Mammary epithelial cell (primary cell): ENCODE measurements at regions of chr9 and their contacts with region 1.

Region 1: DNA sequence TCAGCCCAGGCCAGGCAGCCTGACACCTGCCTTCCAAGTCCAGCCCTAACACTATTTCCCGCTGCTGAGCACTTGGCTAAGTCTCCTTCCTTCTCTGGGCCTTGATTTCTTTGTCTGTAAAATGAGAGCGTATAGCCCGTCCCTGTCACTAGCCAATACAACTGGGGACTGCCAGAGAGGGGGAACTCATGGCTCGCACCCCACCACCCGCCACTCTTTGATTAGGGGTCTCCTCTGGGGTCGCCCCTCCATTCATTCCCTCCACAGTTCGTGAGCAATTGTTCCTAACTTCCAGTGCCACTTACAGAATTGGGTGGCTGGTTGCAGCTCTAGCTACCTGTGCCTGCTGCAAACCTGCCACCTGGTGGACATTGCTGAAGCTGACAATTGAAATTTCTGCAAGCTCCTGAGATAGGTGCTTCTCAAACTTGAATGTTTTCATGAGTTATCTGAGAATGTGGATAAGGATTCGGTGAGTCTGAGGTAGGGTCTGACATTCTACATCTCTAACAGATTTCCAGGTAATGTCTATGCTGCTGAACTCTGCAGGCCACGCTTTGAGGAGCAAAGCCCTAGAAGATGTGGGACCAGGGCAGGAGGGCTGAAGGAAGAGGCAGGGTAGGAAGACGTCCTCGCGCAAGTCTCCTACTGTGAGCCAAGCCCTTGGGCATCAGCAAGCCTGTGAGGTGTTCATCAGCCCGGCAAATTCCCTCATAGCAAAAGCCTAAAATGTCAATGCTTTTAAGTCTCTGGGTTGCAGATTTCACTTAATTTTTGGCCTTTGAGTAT is 13.3 kb upstream of the RECK start:
- DNase-seq: peak; percentile 52
- H3K4me3 ChIP-seq: no peak overlapping the region
- H3K27ac ChIP-seq: no peak overlapping the region
- H3K4me1 ChIP-seq: peaks cover 5% of the 10 kb centered on the region
- H3K27me3 ChIP-seq: no peaks in the 10 kb centered on the region
- CTCF ChIP-seq: peak; percentile 91 to 94

Region 2: DNA sequence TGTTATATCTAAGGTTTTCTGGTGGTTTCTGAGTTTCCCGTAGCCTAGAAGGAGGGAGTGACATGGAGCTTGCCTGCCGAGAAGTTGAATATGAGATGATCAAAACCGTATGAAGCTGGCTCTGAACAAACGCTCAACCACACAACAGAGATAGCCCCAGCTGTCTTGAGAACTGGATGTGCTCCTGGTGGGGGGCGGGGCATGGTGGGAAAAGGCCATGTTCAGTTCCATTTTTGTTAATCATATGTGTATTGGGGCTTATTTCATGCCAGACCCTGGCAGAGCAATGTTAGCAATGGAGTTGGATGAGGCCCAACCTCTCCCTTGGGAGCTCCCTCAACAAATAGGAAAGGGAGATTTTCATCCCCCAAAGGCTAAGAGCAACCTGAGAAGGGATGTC is 1337.2 kb before region 1 on chr9:
- CTCF ChIA-PET with region 1: no interaction called
- dilution Hi-C with region 1: no loop called
- in situ Hi-C with region 1: no loop called
- intact Hi-C with region 1: no loop called
- DNase-seq: no peak
- H3K4me3 ChIP-seq: no peak overlapping the region
- H3K27ac ChIP-seq: no peak overlapping the region
- H3K4me1 ChIP-seq: no peaks in the 10 kb centered on the region
- H3K27me3 ChIP-seq: no peaks in the 10 kb centered on the region
- CTCF ChIP-seq: no peak

Region 3: GRCh38 chr9:35835216-35835632 is 188.2 kb before region 1 on chr9:
- CTCF ChIA-PET with region 1: no interaction called
- dilution Hi-C with region 1: no loop called
- in situ Hi-C with region 1: no loop called
- intact Hi-C with region 1: no loop called
- DNase-seq: no peak
- H3K4me3 ChIP-seq: no peak overlapping the region
- H3K27ac ChIP-seq: no peak overlapping the region
- H3K4me1 ChIP-seq: no peaks in the 10 kb centered on the region
- H3K27me3 ChIP-seq: no peaks in the 10 kb centered on the region
- CTCF ChIP-seq: peak; percentile 22 to 50

Region 4: DNA sequence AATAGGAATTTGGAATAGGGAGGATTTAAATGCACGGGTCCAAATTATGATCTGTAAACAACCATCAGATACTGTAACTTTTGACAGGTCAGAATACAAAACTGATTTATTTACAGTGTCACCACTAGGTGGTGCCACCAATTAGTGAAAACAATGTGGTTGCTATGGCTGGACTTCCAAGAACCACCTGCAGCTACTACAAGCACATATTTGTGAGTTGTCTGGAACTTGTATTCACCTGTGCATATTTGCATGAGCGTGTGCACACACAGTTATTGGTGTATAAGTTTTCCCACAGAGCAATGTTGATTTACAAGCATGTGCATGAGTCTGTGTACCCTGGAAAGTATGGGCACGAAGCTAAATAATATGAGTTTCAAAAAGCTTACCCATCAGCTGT is 120.4 kb before region 1 on chr9:
- CTCF ChIA-PET with region 1: interaction called, 5 read pairs
- dilution Hi-C with region 1: no loop called
- in situ Hi-C with region 1: loop called in 1 of 2 experiments (anchors 10 kb)
- intact Hi-C with region 1: loop called (anchors 2 kb)
- DNase-seq: peak; percentile 59
- H3K4me3 ChIP-seq: no peak overlapping the region
- H3K27ac ChIP-seq: no peak overlapping the region
- H3K4me1 ChIP-seq: peaks cover 38% of the 10 kb centered on the region
- H3K27me3 ChIP-seq: peaks cover 1% of the 10 kb centered on the region
- CTCF ChIP-seq: peak; percentile 61 to 67

Region 5: DNA sequence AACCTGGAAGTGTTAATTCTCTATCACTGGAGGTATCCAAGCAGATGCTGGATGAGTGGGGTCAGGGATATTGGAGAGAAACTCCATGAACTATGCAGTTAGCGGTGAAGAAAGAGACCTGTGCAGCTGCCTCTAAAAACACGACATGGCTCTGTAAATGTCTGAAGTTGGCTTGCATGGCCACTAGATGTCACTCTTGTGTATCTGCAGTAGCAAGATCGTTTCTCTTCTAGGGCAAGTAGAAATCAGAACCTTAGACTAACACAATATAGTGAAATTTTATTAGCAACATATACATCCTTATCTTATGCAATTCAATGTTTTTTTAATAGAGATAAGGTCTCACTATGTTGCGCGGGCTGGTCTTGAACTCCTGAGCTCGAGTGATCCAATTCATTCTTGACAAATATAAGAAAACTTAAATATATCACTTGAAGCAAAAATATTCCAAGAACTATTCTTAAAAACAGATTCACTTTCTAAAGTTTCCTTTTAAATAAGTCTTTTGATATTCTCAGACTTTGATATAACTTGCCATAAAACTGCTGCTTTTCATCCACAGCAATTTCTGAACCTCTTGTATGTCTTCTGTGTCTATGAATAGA is 68.4 kb before region 1 on chr9:
- CTCF ChIA-PET with region 1: interaction called, 4 read pairs
- dilution Hi-C with region 1: no loop called
- in situ Hi-C with region 1: loop called in 1 of 2 experiments (anchors 5 kb)
- intact Hi-C with region 1: loop called (anchors 1 kb)
- DNase-seq: peak; percentile 63
- H3K4me3 ChIP-seq: no peak overlapping the region
- H3K27ac ChIP-seq: no peak overlapping the region
- H3K4me1 ChIP-seq: no peaks in the 10 kb centered on the region
- H3K27me3 ChIP-seq: no peaks in the 10 kb centered on the region
- CTCF ChIP-seq: peak; percentile 84 to 94

Region 6: DNA sequence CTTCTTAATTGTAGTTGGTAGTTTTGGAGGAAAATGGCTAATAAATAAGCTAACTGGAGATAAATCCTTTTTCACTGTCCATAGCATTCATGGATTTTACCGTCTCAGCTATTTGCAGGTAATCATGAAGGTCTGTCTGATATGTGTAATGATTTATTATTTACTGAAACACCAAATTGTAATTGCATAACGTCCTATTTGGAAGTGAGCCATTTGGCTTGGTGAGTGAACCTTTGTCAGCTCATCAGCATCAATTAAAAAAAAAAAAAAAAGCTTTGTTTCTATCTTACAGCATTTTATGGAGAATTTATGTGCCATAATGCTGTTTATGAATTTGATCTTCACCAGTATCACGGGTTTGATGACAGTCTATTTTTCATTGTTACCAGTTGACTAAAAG is 33.4 kb after region 1 on chr9:
- CTCF ChIA-PET with region 1: no interaction called
- dilution Hi-C with region 1: loop called (anchors 5 kb)
- in situ Hi-C with region 1: no loop called
- intact Hi-C with region 1: no loop called
- DNase-seq: no peak
- H3K4me3 ChIP-seq: no peak overlapping the region
- H3K27ac ChIP-seq: no peak overlapping the region
- H3K4me1 ChIP-seq: no peaks in the 10 kb centered on the region
- H3K27me3 ChIP-seq: no peaks in the 10 kb centered on the region
- CTCF ChIP-seq: no peak

Region 7: DNA sequence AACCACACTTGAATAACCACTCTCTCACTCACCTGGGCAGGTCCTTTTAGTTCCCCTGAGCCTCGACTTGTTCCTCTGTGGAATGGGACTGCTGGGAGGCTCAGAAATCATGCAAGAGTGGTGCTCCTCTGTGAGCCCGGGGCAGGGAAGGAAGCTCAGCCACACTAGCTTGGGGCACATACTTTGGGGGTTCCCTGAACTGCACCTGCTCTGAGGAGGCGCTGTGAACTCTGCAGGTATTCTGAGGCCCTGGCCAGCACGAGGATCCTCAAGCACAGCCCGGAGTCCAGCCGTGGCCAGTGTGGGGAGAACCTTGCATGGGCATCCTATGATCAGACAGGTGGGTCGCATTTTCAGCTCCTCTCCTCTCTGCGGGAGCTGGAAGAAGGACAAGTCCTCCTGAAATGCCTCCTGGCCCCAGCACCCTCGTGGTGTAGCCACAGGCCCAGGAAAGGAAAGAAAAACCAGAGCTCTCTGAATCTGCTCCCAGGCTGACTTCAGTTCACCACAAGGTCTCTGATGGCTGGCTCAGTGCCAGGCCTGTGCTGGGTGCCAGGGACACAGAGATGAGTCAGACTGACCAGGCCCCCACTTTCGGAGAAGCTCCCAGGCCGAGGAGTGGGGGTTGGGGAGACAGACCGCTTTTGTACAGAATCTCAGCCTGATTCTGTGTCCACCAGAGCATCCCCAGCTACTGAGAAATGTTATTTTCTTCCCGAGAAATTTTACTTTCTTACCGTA is 125.0 kb after region 1 on chr9:
- CTCF ChIA-PET with region 1: no interaction called
- dilution Hi-C with region 1: loop called (anchors 10 kb)
- in situ Hi-C with region 1: no loop called
- intact Hi-C with region 1: no loop called
- DNase-seq: peak; percentile 92
- H3K4me3 ChIP-seq: no peak overlapping the region
- H3K27ac ChIP-seq: no peak overlapping the region
- H3K4me1 ChIP-seq: peaks cover 24% of the 10 kb centered on the region
- H3K27me3 ChIP-seq: no peaks in the 10 kb centered on the region
- CTCF ChIP-seq: no peak

Region 8: GRCh38 chr9:36190388-36191287 is 167.2 kb after region 1 on chr9 and contains the start of gene CLTA:
- CTCF ChIA-PET with region 1: no interaction called
- dilution Hi-C with region 1: loop called (anchors 5 kb)
- in situ Hi-C with region 1: no loop called
- intact Hi-C with region 1: no loop called
- DNase-seq: peak; percentile 99
- H3K4me3 ChIP-seq: peak within 1 kb of the TSS; percentile 65 to 97 (median 72)
- H3K27ac ChIP-seq: peak within 1 kb of the TSS; percentile 89
- H3K4me1 ChIP-seq: peaks cover 34% of the 10 kb centered on the region
- H3K27me3 ChIP-seq: no peaks in the 10 kb centered on the region
- CTCF ChIP-seq: peak; percentile 43 to 62
- total RNA-seq, gene CLTA: 130 to 217 TPM